ENCODE measurements at regions of chr10 and their contacts with region 1.

Region 1: GRCh38 chr10:35409094-35409582 is 72.8 kb downstream of the CCNY start:
- DNase-seq: peak; percentile 48 to 78
- ATAC-seq: peak; percentile 99
- H3K4me3 ChIP-seq: no peak overlapping the region
- H3K27ac ChIP-seq: peak overlapping the region; percentile 64
- H3K4me1 ChIP-seq: peaks cover 50% of the 10 kb centered on the region
- H3K27me3 ChIP-seq: no peaks in the 10 kb centered on the region
- CTCF ChIP-seq: no peak

Region 2: GRCh38 chr10:35336084-35336831 is 72.9 kb before region 1 on chr10 and contains the start of gene CCNY:
- intact Hi-C with region 1: loop called in 1 of 2 experiments (anchors 5 kb)
- DNase-seq: peak; percentile 85 to 88
- ATAC-seq: peak; percentile 77 to 81 (median 79)
- H3K4me3 ChIP-seq: peak within 1 kb of the TSS; percentile 97
- H3K27ac ChIP-seq: peak within 1 kb of the TSS; percentile 92
- H3K4me1 ChIP-seq: peaks cover 67% of the 10 kb centered on the region
- H3K27me3 ChIP-seq: no peaks in the 10 kb centered on the region
- CTCF ChIP-seq: no peak
- total RNA-seq, gene CCNY: 47.0 to 55.8 (median 50.5) TPM

Region 3: GRCh38 chr10:35347121-35347562 is 62.0 kb before region 1 on chr10:
- intact Hi-C with region 1: loop called in 1 of 2 experiments (anchors 5 kb)
- DNase-seq: no peak
- ATAC-seq: peak; percentile 81 to 95 (median 86)
- H3K4me3 ChIP-seq: no peak overlapping the region
- H3K27ac ChIP-seq: peak overlapping the region; percentile 59
- H3K4me1 ChIP-seq: peaks cover 75% of the 10 kb centered on the region
- H3K27me3 ChIP-seq: no peaks in the 10 kb centered on the region
- CTCF ChIP-seq: no peak

Region 4: DNA sequence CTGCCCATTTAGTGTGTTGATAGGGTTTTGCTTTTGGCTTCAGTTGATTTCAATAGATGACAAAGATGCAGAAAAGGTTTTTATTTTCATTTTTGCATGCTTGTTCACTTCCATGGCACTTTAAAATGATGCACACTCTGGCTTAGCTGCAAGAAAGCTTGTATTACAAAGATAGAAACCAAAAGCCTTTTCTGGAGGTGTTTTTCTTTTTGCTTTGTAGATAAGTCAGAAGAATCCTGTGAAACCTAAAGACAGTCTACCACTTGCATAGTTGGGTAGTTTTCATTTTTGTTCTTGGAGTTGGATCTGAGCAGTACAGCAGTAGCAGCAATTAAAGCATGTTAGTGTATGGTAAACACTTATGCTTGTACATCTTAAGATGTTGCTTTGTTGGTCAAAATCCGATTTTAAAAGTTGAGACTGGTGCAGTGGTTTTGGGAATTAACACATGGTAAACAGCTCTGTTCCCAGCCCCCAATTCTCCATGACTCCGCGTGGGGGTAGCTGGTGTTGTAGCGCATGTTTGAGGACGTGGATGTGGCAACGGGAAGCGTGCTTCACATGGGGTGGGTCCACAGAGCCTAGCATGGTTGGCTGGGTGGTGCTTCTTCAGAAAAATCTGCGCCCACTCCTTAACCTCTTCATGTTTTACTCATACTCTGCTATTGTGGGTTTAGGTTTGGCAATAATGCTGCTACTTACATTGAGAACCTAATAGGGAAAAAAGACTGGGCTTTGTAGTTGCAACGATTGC is 53.0 kb before region 1 on chr10:
- intact Hi-C with region 1: loop called in 1 of 2 experiments (anchors 5 kb)
- DNase-seq: no peak
- ATAC-seq: no peak
- H3K4me3 ChIP-seq: no peak overlapping the region
- H3K27ac ChIP-seq: no peak overlapping the region
- H3K4me1 ChIP-seq: peaks cover 43% of the 10 kb centered on the region
- H3K27me3 ChIP-seq: no peaks in the 10 kb centered on the region
- CTCF ChIP-seq: no peak

Region 5: DNA sequence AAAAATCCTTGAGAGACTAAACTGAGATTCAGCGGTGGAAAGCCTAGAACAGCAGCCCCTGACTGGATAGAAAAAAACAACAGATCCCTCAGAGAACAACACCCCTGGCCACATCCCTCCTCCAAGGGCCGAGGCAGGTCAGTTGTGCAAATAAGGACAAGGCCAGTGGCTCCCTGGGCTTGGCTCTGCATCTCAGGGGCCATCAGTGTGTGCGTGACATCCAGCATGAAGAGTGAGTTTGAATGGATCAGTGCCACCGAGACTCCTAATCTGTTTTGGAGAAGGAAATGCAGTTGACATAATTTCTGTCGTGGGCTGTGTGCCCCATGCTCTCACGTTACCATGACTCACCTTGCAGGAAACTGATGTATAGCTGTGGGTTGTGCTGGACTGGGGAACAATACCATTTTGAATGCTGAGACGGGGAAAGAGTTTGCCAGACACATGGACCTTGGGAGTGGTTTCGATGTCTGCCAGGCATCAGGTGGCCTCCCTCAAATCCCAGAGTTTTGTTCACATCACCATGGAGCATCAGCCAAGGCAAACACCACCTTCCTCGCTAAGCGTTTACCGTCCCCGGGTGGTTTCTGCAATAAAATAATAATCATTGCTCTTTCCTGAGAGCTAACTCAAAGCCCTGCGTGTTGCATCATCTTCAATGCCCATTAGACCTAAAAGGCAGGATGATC is 386.1 kb after region 1 on chr10:
- intact Hi-C with region 1: no loop called
- DNase-seq: no peak
- ATAC-seq: no peak
- H3K4me3 ChIP-seq: no peak overlapping the region
- H3K27ac ChIP-seq: no peak overlapping the region
- H3K4me1 ChIP-seq: no peaks in the 10 kb centered on the region
- H3K27me3 ChIP-seq: no peaks in the 10 kb centered on the region
- CTCF ChIP-seq: no peak